Right ventricle myocardium inferior (tissue), 1 donor: ENCODE measurements at regions of chr9 and their contacts with region 1.

Region 1: GRCh38 chr9:7273391-7273974 is 515.7 kb downstream of the KDM4C start:
- DNase-seq: no peak
- ATAC-seq: no peak

Region 2: GRCh38 chr9:7053903-7054302 is 219.6 kb before region 1 on chr9:
- intact Hi-C with region 1: loop called (anchors 5 kb)
- DNase-seq: no peak
- ATAC-seq: no peak